Activated CD8-positive, alpha-beta memory T cell treated with anti-CD3 and anti-CD28 coated beads, Interleukin-2, amount 10 ng/mL, durations not matched to agents 7 days and 5 days (primary cell): ENCODE measurements at regions of chr9 and their contacts with region 1.

Region 1: DNA sequence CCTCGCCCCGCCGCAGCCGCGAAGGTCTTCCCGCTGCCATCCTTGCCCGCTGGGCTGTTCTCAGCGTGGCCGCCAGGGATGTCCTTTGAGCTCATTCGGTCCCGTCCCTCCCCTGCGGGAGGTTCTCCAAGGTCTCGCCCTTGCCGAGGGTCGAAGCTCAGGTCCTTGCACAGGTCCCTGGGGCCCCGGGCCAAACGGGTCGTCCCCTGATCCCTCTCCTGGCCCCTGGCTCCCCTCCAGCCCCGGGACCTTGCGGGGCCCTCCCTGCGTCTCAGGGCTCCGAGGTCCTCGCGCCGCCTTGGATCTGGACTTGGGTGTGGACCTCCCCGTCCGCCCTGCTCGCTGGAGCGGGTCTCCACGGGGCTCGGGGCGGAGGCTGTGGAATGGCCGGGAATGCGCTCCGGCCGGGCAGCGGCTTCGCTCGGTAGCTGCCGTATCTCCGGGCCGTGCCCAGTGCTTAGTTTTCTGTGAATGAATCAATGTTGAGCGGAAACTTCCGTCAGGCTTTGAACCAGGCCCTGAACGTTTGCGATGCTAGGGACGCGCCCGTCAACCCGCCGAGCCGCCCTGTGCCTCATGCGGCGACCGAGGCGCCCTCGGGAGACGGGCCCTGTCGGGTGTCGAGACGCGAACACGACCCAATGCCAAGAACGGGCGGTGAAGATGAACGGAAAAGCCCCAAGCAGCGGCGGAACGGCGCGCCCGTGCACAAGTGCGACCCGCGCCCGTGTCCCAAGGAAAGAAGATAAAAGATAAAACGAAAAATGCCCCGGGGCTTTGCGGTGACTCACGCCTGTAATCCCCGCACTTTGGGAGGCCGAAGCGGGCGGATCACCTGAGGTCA is 789 bp downstream of the RNU6ATAC start:
- DNase-seq: peak; percentile 78
- ATAC-seq: peak; percentile 18
- H3K4me3 Mint-ChIP-seq: no peak overlapping the region
- H3K27ac Mint-ChIP-seq: no peak overlapping the region
- H3K4me1 Mint-ChIP-seq: peaks cover 20% of the 10 kb centered on the region
- H3K27me3 Mint-ChIP-seq: no peaks in the 10 kb centered on the region

Region 2: GRCh38 chr9:134135343-134136118 is 28.0 kb before region 1 on chr9 and contains the start of gene WDR5:
- CTCF ChIA-PET with region 1: interaction called, 16 read pairs
- DNase-seq: peak; percentile 92
- ATAC-seq: peak; percentile 77
- H3K4me3 Mint-ChIP-seq: peak within 1 kb of the TSS; percentile 90
- H3K27ac Mint-ChIP-seq: peak within 1 kb of the TSS; percentile 86
- H3K4me1 Mint-ChIP-seq: peaks cover 38% of the 10 kb centered on the region
- H3K27me3 Mint-ChIP-seq: no peaks in the 10 kb centered on the region
- total RNA-seq, gene WDR5: 41.2 to 47.0 TPM